ENCODE measurements at regions of chr21 and their contacts with region 1.

Region 1: GRCh38 chr21:33324291-33325221 is at the start of gene IFNAR1:
- DNase-seq: peak; percentile 98 to 99 (median 99)
- ATAC-seq: peak; percentile 98 to 100 (median 100)
- H3K4me3 ChIP-seq: peak within 1 kb of the TSS; percentile 68 to 100 (median 94)
- H3K27ac ChIP-seq: peak within 1 kb of the TSS; percentile 92 to 100 (median 99)
- H3K4me1 ChIP-seq: peaks cover 10 to 48% (median 30%) of the 10 kb centered on the region in 12 donors
- H3K27me3 ChIP-seq: no peaks in the 10 kb centered on the region
- CTCF ChIP-seq: peak in 1 of 12 donors; percentile 7
- POLR2A ChIP-seq: peak in 1 of 2 donors; percentile 78
- total RNA-seq, gene IFNAR1: 15.6 to 38.9 (median 22.5) TPM

Region 2: GRCh38 chr21:33229784-33230544 is 94.6 kb before region 1 on chr21 and contains the start of gene IFNAR2:
- intact Hi-C with region 1: no loop called
- DNase-seq: peak; percentile 81 to 91 (median 86)
- ATAC-seq: peak; percentile 62 to 98 (median 90)
- H3K4me3 ChIP-seq: peak within 1 kb of the TSS; percentile 88 to 100 (median 98)
- H3K27ac ChIP-seq: peak within 1 kb of the TSS; percentile 90 to 100 (median 98)
- H3K4me1 ChIP-seq: peaks cover 2 to 51% (median 31%) of the 10 kb centered on the region in 12 donors
- H3K27me3 ChIP-seq: no peaks in the 10 kb centered on the region
- CTCF ChIP-seq: peak in 1 of 12 donors; percentile 9
- POLR2A ChIP-seq: peak in 1 of 2 donors; percentile 89
- total RNA-seq, gene IFNAR2: 6.5 to 46.7 (median 12.9) TPM

Region 3: GRCh38 chr21:33259995-33260394 is 64.6 kb before region 1 on chr21:
- intact Hi-C with region 1: loop called in 2 of 10 experiments (anchors 10 kb)
- DNase-seq: no peak
- ATAC-seq: no peak
- H3K4me3 ChIP-seq: no peak overlapping the region
- H3K27ac ChIP-seq: peak overlapping the region in 1 of 12 donors; percentile 78
- H3K4me1 ChIP-seq: peaks cover 0 to 46% (median 0%) of the 10 kb centered on the region in 12 donors
- H3K27me3 ChIP-seq: no peaks in the 10 kb centered on the region
- CTCF ChIP-seq: no peak
- POLR2A ChIP-seq: no peak

Region 4: GRCh38 chr21:33266050-33266788 is 58.3 kb before region 1 on chr21 and contains the start of gene IL10RB:
- intact Hi-C with region 1: loop called in 1 of 10 experiments (anchors 10 kb)
- DNase-seq: peak; percentile 76 to 89 (median 82)
- ATAC-seq: peak; percentile 73 to 95 (median 92)
- H3K4me3 ChIP-seq: peak within 1 kb of the TSS; percentile 57 to 100 (median 82)
- H3K27ac ChIP-seq: peak within 1 kb of the TSS; percentile 69 to 98 (median 88)
- H3K4me1 ChIP-seq: peaks cover 0 to 66% (median 13%) of the 10 kb centered on the region in 12 donors
- H3K27me3 ChIP-seq: no peaks in the 10 kb centered on the region
- CTCF ChIP-seq: no peak
- POLR2A ChIP-seq: peak in 1 of 2 donors; percentile 65
- total RNA-seq, gene IL10RB: 4.5 to 28.2 (median 8.3) TPM

Region 5: GRCh38 chr21:33286600-33287456 is 37.7 kb before region 1 on chr21:
- intact Hi-C with region 1: loop called in 2 of 10 experiments (anchors 1 to 5 kb)
- DNase-seq: peak in 4 of 5 donors; percentile 62 to 81 (median 66)
- ATAC-seq: peak; percentile 47 to 90 (median 80)
- H3K4me3 ChIP-seq: peak overlapping the region in 1 of 12 donors; percentile 16
- H3K27ac ChIP-seq: peak overlapping the region; percentile 26 to 86 (median 70)
- H3K4me1 ChIP-seq: peaks cover 0 to 44% (median 26%) of the 10 kb centered on the region in 12 donors
- H3K27me3 ChIP-seq: no peaks in the 10 kb centered on the region
- CTCF ChIP-seq: no peak
- POLR2A ChIP-seq: no peak

Region 6: DNA sequence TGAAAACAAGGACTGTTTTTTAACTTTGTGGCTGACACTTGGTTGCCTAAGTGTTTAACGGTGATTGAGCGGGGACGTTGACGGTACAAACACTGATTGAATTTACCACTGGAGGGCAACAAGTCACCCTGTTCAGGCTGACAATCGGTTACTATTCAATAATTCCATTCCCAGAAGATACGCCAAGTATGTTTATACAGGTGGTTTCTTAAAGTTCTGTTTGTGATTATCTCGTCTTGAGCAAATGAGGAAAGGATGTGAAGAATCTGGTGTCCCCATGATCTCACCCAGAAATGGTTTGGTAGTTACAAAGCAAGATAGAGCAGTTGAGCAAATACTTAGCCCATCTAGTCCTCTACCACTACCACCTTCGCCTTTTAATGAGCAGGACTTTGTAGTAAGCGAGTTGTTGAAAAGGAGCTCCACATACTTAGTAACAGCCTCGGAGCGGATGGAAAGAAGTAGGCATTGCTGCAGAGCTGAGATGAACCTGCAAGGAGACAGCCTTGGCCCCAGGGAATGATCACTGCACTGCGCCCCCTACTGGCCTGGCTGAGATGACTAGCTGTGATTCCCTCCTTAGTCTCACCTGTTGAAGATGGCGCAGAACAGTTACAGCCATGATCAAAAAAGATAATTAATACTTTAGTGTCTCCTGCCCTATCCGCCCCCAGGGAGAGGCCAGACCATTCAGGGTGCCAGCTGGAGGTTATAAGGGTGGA is 36.5 kb after region 1 on chr21:
- intact Hi-C with region 1: loop called in 1 of 10 experiments (anchors 2 kb)
- DNase-seq: peak; percentile 74 to 86 (median 77)
- ATAC-seq: peak; percentile 74 to 86 (median 80)
- H3K4me3 ChIP-seq: peak overlapping the region in 11 of 12 donors; percentile 16 to 55 (median 36)
- H3K27ac ChIP-seq: peak overlapping the region in 11 of 12 donors; percentile 34 to 90 (median 58)
- H3K4me1 ChIP-seq: peaks cover 0 to 39% (median 20%) of the 10 kb centered on the region in 12 donors
- H3K27me3 ChIP-seq: no peaks in the 10 kb centered on the region
- CTCF ChIP-seq: peak; percentile 71 to 88 (median 82)
- POLR2A ChIP-seq: no peak